GM10248 (cell line): ENCODE measurements at regions of chr19 and their contacts with region 1.

Region 1: GRCh38 chr19:19531951-19532805 is 3.5 kb downstream of the YJEFN3 start:
- DNase-seq: peak; percentile 86
- CTCF ChIP-seq: peak; percentile 93

Region 2: GRCh38 chr19:19461671-19462581 is 70.3 kb before region 1 on chr19:
- CTCF ChIA-PET with region 1: no interaction called
- POLR2A ChIA-PET with region 1: no interaction called
- DNase-seq: no peak
- CTCF ChIP-seq: no peak

Region 3: DNA sequence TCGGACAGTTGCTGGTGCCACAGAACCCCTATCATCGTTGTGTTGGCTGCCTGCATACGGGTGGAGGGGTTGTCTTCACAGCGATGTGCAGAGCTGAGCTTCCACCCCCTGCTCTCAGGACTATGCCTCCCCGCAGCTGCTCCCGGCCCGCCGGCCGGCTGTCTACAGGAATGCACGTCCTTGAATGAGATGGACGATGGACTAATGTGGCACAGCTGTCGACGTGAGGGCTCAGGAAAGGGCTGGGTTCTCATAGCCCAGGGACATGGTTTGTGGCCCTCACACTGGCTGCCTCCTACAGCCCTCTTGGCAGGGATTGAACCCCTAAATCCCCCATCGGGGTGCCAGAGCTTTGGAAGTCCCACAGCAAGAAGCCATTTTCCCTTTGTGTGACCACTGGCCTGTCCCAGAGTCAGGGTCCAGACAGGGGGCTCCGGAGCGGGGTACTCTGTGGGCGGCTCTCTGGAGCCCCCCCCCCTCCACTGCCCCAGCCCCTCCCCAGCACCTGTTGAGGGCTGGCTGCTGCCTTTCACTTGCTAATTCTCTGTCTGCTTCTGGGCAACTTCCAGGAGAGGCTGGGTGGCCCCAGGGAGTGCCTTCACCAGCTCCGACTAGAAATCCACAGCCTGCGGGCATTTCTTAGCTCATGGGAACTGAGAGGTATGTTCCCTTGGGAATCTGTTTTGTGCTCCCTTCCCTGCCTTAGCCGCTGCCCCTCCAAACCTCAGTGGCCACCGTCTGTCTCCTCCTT is 57.0 kb before region 1 on chr19:
- CTCF ChIA-PET with region 1: no interaction called
- POLR2A ChIA-PET with region 1: no interaction called
- DNase-seq: no peak
- CTCF ChIP-seq: no peak

Region 4: DNA sequence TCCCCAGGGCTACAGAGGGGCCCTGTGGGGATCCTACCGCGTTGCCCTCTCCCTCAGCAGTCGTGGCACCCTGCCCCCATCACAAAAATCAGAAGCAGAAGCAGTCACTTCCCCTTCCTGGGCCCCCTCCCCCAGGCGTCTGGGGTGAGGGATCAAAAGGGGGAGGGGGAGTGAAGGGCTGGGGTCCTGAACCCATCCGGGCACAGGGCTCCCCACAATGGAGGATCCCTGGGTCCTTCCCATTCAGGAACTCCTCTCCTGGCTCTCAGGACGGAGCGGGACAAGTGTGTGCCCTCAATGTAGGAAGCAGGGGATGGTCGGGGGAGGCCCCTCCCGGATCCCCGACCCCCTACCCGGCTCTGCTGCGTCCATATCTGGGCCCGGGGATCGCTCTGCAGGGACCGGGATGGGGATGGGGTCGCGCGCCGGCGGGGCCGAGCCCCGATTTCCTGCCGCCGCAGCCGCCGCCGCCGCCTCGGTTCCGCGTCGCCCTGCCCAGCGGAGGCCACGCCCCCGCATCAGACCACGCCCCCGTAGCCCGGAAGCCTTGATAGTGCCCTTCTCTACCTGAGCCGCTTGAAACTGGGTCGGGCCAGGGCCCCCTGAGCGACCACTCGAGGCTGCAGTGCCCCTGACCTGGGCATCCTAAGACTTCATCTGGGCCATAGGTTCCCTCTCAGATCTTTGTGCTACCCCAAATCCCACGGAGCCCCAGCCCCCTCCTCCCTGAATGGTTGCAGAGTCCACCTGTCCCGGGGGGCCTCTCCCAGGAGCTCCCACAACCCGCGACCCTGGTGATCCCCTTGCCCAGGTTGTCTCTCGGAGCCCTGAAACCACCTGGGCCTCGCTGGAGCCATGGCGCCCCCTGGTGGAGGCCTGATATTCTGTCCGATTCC is 111.2 kb after region 1 on chr19 and contains the start of gene GMIP:
- CTCF ChIA-PET with region 1: interaction called, 52 read pairs
- POLR2A ChIA-PET with region 1: no interaction called
- DNase-seq: peak; percentile 95
- CTCF ChIP-seq: peak; percentile 73

Region 5: DNA sequence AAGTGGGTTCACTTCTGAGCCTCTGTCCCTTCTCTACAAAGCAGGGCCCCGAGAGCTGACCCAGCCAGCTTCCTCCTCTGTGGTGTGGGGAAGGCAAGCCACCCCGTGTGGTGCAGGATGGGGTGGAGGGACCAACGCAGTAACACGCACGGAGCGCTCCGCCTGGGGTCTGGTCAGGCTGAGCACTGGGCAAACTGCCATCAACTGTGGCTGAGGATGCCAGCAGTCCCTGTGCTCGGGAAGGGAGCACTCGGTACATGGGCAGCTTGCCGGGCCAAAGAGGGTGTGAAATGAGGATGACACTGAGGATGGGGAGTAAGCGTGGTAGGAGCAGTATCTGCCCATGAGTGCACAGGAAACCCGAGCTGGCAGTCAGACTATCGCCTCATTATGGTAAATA is 118.9 kb after region 1 on chr19:
- CTCF ChIA-PET with region 1: interaction called, 52 read pairs
- POLR2A ChIA-PET with region 1: no interaction called
- DNase-seq: no peak
- CTCF ChIP-seq: no peak

Region 6: DNA sequence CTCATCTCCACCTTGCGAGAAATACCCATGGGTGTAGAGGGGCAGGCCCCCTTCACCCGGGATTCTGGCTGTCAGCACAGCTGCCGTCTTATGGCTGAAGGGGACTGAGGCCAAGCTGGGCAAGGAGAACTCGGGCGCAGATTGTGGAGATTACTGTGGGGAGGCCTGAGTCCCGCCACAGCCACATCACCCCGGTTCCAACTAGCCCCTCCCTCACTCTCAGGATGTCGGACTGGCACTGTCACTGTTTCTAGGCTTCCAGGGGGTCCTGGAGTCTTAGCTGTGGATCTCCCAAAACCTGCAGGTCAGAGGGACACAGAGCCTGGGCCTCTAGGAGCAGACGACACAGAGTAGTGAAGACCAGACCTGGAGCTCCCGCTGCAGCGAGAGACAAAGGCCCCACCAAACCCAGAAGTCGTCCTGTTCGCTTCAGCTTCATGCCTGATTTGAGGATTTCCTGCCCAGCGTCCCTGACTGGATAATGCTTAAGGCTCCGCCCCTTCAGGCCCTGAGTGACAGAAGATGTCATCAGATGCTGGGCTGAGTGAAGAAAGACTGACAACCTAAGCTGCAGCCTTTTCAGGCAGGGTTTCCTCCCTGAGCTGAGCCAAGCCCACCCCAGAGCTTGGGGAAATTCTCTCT is 424.4 kb after region 1 on chr19:
- CTCF ChIA-PET with region 1: interaction called, 15 read pairs
- POLR2A ChIA-PET with region 1: no interaction called
- DNase-seq: no peak
- CTCF ChIP-seq: no peak